ENCODE measurements at regions of chrX and their contacts with region 1.

Region 1: DNA sequence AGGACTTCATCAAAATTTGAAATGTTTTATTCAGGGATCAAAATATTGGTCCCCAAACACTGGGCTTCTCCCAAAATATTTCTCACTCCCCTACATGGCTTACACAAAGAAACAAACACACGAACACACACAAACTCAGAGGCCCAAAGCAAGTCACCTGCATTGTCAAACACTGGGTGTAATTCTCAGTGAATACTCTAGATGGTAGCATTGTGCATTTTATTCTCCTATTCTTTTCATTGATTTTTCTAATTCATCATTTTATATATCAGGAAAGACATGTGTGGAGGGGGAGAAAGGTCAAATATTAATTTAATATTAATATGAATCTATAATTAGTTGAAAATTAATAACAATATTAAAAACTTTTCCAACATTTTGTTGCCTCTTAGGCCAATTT is 72.3 kb upstream of the TNMD start:
- DNase-seq: no peak
- H3K4me3 Mint-ChIP-seq: no peak overlapping the region
- H3K27ac Mint-ChIP-seq: no peak overlapping the region
- H3K4me1 Mint-ChIP-seq: no peaks in the 10 kb centered on the region
- H3K27me3 Mint-ChIP-seq: no peaks in the 10 kb centered on the region

Region 2: GRCh38 chrX:100636321-100636991 is 124.0 kb after region 1 on chrX and contains the start of gene TSPAN6:
- CTCF ChIA-PET with region 1: interaction called, 14 read pairs
- POLR2A ChIA-PET with region 1: no interaction called
- intact Hi-C with region 1: loop called (anchors 2 kb)
- DNase-seq: peak; percentile 80
- H3K4me3 Mint-ChIP-seq: peak within 1 kb of the TSS; percentile 80
- H3K27ac Mint-ChIP-seq: no peak within 1 kb of the TSS
- H3K4me1 Mint-ChIP-seq: peaks cover 8% of the 10 kb centered on the region
- H3K27me3 Mint-ChIP-seq: peaks cover 2% of the 10 kb centered on the region
- total RNA-seq, gene TSPAN6: 0.19 TPM in 1 of 2 experiments, not detected in the other

Measured in activated CD4-positive, alpha-beta memory T cell treated with anti-CD3 and anti-CD28 coated beads for 36 hours (primary cell).